Dendritic cell treated with granulocyte-macrophage colony-stimulating factor and Interleukin-4, amounts not matched to agents 40 ng/mL and 50 ng/mL, for 4 days (primary cell): ENCODE measurements at regions of chr6 and their contacts with region 1.

Region 1: DNA sequence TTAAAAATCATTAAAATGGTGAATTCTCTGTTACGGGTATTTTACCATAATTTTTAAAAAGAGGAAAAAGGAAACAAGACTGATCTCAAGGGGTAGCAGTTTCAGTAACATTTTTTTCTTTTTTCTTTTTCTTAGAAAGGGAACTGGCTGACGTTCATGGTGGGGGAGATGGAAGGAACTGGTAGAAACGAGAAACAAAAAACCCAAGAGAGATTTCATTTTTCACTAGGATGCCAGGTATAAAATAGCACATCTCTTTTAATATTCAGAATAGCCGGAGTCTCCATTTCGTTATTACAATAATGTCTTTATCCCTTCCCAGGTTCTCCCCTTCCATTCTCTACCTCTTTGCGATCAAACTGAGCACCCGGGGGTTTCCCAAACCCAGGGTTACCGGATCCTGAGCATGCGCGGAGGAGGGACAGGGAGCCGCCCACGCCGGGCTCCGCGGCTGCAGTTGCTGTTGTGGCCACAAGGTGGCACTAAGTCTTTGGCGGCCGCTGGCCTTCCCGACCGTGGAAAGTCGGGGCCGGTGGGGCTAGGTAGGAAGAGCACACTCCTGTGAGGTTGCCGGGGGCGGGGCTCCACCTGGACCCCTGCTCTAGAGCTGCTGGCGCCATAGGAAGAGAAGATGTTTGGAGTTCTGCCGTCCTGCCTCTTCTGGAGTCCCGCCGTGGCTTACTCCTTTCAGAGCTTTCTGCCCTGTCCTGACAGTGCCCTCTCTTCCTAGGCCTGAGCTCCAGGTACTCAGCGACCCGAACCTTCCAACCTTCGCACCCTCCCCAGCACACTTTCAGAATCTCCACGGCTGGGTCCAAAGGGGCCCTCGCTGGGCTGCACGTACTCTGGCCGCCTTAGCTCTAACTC is 146.8 kb downstream of the SH3BGRL2 start:
- H3K4me3 Mint-ChIP-seq: peak overlapping the region; percentile 70
- H3K27ac Mint-ChIP-seq: no peak overlapping the region
- H3K4me1 Mint-ChIP-seq: peaks cover 24% of the 10 kb centered on the region
- H3K27me3 Mint-ChIP-seq: peaks cover 4% of the 10 kb centered on the region

Region 2: GRCh38 chr6:79078075-79079025 is 699.6 kb before region 1 on chr6 and contains the start of gene PHIP:
- intact Hi-C with region 1: loop called (anchors 5 kb)
- H3K4me3 Mint-ChIP-seq: peak within 1 kb of the TSS; percentile 92
- H3K27ac Mint-ChIP-seq: peak within 1 kb of the TSS; percentile 99
- H3K4me1 Mint-ChIP-seq: peaks cover 35% of the 10 kb centered on the region
- H3K27me3 Mint-ChIP-seq: no peaks in the 10 kb centered on the region

Region 3: DNA sequence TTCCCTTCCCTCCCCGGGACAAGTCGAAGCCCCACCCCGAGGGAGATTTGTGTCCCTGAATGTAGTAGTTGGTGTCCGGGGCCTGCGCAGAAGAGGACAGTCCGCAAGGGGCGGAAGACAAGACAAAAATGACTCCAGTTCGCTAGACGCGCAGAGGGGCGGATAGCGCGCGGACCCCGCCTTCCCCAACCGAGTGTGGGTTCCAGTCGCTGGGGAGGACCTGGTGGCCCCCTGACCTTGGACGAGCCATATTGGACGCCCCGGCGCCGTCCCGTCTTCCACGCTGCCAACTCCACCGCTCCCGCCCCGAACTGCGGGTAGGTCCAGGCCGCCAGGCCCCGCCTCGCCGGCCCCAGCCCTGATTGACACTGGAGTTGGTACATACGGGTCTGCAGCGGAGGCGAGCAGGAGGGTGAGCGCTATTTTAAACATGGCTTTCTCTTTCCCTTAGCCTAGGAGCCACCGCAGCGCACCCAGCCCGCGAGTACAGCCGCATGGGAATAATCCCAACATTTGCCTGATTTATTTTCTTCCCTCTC is 544.3 kb before region 1 on chr6:
- intact Hi-C with region 1: loop called (anchors 10 kb)
- H3K4me3 Mint-ChIP-seq: peak overlapping the region; percentile 95
- H3K27ac Mint-ChIP-seq: peak overlapping the region; percentile 94
- H3K4me1 Mint-ChIP-seq: peaks cover 6% of the 10 kb centered on the region
- H3K27me3 Mint-ChIP-seq: no peaks in the 10 kb centered on the region

Region 4: GRCh38 chr6:79536954-79537747 is 240.8 kb before region 1 on chr6 and contains the start of gene LCA5:
- intact Hi-C with region 1: loop called (anchors 5 kb)
- H3K4me3 Mint-ChIP-seq: no peak within 1 kb of the TSS
- H3K27ac Mint-ChIP-seq: no peak within 1 kb of the TSS
- H3K4me1 Mint-ChIP-seq: no peaks in the 10 kb centered on the region
- H3K27me3 Mint-ChIP-seq: peaks cover 6% of the 10 kb centered on the region

Region 5: DNA sequence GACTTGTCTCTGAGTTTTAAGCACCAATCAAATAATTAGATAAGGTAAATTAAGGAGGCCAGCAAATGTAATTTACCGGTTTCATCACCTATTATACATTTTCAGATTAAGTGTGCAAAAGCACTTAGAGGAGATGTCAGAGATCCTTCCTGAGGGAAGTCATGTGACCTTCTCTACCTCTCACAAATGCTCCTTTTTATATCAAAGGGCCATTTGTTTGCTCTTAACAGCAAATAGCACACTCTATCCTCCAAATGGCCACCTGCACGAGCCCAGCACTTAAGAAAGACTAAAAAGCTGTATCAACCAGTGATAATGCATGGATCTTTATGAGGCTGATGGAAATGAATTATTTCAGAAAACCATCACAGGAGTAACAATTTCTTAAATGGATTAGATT is 20.0 kb after region 1 on chr6:
- intact Hi-C with region 1: no loop called
- H3K4me3 Mint-ChIP-seq: no peak overlapping the region
- H3K27ac Mint-ChIP-seq: no peak overlapping the region
- H3K4me1 Mint-ChIP-seq: peaks cover 64% of the 10 kb centered on the region
- H3K27me3 Mint-ChIP-seq: peaks cover 4% of the 10 kb centered on the region

Region 6: DNA sequence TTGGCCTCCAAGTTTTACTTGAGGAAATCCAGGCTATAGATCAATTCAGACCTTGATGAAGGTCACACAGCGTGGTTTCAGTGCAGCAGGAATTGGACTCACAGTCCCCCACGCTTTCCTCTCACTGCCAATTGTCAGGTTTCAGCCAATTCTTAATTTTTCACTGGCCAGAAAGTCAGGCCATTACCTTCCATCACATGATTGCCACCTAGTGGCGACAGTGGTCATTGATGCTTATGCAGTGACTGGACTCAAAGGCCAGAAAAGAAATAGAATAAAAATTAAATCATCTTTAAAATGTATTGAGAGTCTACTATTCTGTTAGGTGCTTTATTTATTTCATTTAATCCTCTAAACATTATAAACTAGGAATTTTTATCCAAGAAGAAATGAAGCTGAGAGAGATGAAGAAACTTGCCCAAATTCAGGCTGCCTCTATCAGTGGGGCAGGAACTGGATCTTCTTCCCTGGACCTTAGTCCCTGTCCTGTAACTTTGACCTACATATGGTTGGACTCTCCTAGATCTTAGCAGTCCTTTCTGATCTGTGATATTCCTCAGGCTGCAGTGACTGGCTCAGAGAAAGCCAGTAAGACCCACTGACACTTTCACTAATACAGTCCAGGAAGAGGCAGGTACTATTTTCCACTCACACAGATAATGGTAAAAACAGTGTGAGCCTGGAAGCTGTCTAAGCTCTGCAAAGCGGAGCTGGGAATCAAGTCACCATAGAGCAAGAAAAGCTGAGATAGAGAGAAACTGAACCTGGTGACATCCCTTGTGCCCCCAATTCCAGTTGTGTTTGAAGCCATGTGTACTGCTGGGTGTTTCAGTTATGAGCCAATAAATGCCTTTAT is 36.1 kb after region 1 on chr6:
- intact Hi-C with region 1: loop called (anchors 1 kb)
- H3K4me3 Mint-ChIP-seq: no peak overlapping the region
- H3K27ac Mint-ChIP-seq: no peak overlapping the region
- H3K4me1 Mint-ChIP-seq: peaks cover 19% of the 10 kb centered on the region
- H3K27me3 Mint-ChIP-seq: peaks cover 19% of the 10 kb centered on the region

Region 7: GRCh38 chr6:79824202-79824601 is 46.3 kb after region 1 on chr6:
- intact Hi-C with region 1: no loop called
- H3K4me3 Mint-ChIP-seq: no peak overlapping the region
- H3K27ac Mint-ChIP-seq: no peak overlapping the region
- H3K4me1 Mint-ChIP-seq: no peaks in the 10 kb centered on the region
- H3K27me3 Mint-ChIP-seq: peaks cover 10% of the 10 kb centered on the region

Region 8: GRCh38 chr6:79869600-79870084 is 91.7 kb after region 1 on chr6:
- intact Hi-C with region 1: loop called (anchors 2 kb)
- H3K4me3 Mint-ChIP-seq: peak overlapping the region; percentile 36
- H3K27ac Mint-ChIP-seq: no peak overlapping the region
- H3K4me1 Mint-ChIP-seq: peaks cover 22% of the 10 kb centered on the region
- H3K27me3 Mint-ChIP-seq: peaks cover 4% of the 10 kb centered on the region

Region 9: GRCh38 chr6:80004173-80005072 is 226.5 kb after region 1 on chr6 and contains the start of gene TTK:
- intact Hi-C with region 1: loop called (anchors 10 kb)
- H3K4me3 Mint-ChIP-seq: peak within 1 kb of the TSS; percentile 89
- H3K27ac Mint-ChIP-seq: peak within 1 kb of the TSS; percentile 88
- H3K4me1 Mint-ChIP-seq: peaks cover 16% of the 10 kb centered on the region
- H3K27me3 Mint-ChIP-seq: no peaks in the 10 kb centered on the region